ENCODE measurements at regions of chr17 and their contacts with region 1.

Region 1: GRCh38 chr17:5419356-5419958 is at the start of gene NUP88:
- DNase-seq: peak; percentile 98
- H3K4me3 ChIP-seq: peak within 1 kb of the TSS; percentile 88
- H3K27ac ChIP-seq: peak within 1 kb of the TSS; percentile 96
- H3K4me1 ChIP-seq: peaks cover 31% of the 10 kb centered on the region
- CTCF ChIP-seq: no peak
- total RNA-seq, gene NUP88: 214 and 238 TPM in 2 replicates

Region 2: DNA sequence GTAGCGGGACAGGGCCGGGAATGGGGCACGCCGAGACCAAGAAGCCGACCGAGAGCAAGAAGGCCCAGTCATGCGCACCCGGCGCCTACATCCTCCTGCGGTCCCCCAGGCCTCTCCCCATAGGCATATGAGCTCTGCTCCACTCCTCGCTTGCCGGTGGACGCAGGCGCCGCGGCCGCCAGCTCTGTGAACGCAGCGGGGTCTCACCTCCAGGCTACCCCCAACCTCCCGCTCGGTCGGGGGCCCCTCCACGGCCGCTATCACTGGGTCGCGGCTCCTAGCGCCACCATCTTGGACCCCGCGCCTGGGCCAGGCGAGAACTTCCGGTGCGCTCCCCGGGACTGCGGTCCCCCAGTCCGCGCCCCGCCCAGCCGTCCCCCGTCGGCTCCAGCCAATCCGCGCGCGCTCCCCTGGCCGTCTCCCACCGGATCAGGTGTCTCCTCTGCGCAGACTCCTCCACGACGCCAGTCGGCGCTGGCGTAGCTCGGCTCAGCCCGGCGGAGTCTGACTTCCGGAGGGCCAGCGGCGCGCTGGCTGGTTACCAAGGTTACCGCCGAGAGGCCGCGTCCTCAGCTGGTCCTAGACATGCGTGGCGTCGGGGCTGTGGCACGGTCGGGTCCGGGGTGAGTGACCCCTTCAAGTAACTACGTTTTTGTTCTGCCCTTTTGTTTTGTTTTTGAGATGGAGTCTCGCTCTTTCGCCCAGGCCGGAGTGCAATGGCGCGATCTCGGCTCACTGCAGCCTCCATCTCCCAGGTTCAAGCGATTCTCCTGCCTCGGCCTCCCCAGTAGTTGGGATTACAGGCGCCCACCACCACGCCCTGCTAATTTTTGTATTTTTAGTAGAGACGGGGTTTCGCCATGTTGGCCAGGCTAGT is 227.7 kb before region 1 on chr17 and contains the start of gene ZNF594:
- CTCF ChIA-PET with region 1: no interaction called
- POLR2A ChIA-PET with region 1: no interaction called
- intact Hi-C with region 1: loop called (anchors 2 kb)
- DNase-seq: peak; percentile 97
- H3K4me3 ChIP-seq: peak within 1 kb of the TSS; percentile 97
- H3K27ac ChIP-seq: peak within 1 kb of the TSS; percentile 46
- H3K4me1 ChIP-seq: peaks cover 24% of the 10 kb centered on the region
- CTCF ChIP-seq: peak; percentile 86
- total RNA-seq, gene ZNF594: 42.5 and 43.4 TPM in 2 replicates

Region 3: DNA sequence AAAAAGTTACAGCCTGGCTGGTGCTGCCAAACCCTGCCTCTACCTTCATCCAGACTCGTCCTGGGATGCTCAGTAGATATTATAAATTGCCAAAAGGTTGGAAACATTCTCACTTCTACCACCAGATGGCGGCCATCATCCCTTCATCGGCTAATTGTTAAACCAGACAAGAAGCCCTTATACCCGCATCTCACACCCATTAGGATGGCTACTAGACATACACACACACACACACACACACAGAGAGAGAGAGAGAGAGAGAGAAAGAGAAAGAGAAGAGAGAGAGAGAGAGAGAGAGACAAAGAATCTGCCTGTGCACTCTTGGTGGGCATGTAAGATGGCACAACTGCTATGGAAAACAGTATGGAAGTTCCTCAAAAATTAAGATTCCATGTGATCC is 169.8 kb before region 1 on chr17:
- CTCF ChIA-PET with region 1: no interaction called
- POLR2A ChIA-PET with region 1: interaction called, 4 read pairs
- intact Hi-C with region 1: loop called (anchors 5 kb)
- DNase-seq: peak; percentile 89
- H3K4me3 ChIP-seq: no peak overlapping the region
- H3K27ac ChIP-seq: no peak overlapping the region
- H3K4me1 ChIP-seq: peaks cover 7% of the 10 kb centered on the region
- CTCF ChIP-seq: peak; percentile 82

Region 4: DNA sequence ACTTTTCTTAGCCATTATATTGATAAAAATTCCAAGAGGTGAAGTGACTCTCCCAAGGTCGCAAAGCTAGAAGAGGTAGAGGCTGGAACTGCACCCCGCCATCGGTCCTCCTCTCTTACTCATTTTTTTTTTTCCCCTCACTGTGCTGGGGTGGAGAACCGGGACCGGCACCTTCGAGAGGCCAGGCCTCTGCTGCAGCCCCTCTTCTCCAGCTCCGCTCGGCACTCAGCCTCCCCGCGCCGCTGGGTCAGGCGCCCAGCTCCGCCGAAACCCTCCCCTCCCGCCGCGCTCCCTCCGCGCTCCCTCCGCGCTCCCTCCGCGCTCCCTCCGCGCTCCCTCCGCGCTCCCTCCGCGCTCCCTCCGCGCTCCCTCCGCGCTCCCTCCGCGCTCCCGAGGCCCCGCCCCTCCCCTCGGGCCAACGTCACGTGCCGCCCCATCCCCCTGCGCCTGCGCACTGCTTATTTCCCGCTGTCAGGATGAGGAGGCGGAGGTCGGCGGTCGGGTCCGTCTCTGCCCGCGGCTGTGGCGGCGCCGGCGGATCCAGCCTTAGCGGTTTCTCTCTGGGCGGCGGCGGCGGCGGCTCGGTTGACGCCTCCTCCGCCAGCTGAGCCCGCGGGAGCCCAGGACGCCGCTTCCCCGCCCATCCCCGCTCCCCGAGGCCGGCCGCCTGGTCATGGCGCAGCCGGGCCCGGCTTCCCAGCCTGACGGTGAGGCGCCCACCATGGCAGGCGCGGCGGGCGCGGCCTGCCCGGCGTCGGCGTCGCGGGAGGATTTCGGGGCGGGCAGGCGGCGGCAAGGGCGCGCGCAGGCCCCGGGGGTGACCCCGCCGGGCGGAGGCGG is 137.4 kb before region 1 on chr17 and contains the start of gene RABEP1:
- CTCF ChIA-PET with region 1: no interaction called
- POLR2A ChIA-PET with region 1: interaction called, 4 read pairs
- intact Hi-C with region 1: loop called (anchors 2 kb)
- DNase-seq: peak; percentile 95
- H3K4me3 ChIP-seq: peak within 1 kb of the TSS; percentile 74
- H3K27ac ChIP-seq: peak within 1 kb of the TSS; percentile 50
- H3K4me1 ChIP-seq: peaks cover 40% of the 10 kb centered on the region
- CTCF ChIP-seq: peak; percentile 20; the same call in 1 of the 2 replicates
- total RNA-seq, gene RABEP1: 53.2 and 58.6 TPM in 2 replicates

Region 5: DNA sequence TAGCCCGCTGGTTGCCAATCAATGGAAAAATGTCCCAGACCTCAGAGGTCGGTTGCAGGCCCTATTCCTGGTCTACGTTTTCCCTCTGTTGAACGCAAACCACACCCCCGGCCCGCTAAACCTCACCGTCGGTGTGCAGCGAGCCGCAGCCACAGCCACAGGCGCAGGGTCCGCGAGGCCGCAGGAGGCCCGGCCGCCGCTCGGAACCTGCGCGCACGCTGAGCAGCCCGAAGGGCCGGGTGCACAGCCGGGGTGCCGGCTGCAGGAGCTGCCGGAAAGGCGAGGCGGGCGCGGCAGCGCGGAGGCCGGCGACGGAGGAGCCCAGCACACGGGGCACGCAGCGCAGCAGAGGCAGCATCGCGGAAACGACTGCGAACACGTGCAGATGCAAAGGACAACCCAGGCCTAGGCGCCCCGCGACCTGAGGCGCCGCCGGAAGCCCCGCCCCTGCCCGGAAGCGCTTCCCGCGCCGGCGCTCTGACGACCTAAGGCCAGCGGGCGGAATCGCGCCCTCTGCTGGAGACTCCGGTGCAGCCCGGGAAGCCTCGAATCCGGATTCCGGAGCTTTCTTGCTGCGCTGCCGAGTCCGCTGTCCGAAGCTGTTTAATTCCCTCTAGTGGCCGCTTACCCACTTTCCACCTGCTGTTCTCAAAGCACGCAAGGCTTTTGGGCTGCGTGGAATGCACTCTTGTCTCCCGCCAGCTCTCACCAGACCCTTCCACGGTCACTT is 19.4 kb after region 1 on chr17 and contains the start of gene C1QBP:
- CTCF ChIA-PET with region 1: interaction called, 4 read pairs
- POLR2A ChIA-PET with region 1: interaction called, 3 read pairs
- intact Hi-C with region 1: loop called (anchors 2 kb)
- DNase-seq: peak; percentile 96
- H3K4me3 ChIP-seq: peak within 1 kb of the TSS; percentile 84
- H3K27ac ChIP-seq: peak within 1 kb of the TSS; percentile 58
- H3K4me1 ChIP-seq: peaks cover 27% of the 10 kb centered on the region
- CTCF ChIP-seq: peak; percentile 94
- total RNA-seq, gene C1QBP: 257 and 260 TPM in 2 replicates

Region 6: GRCh38 chr17:5468075-5468473 is 48.6 kb after region 1 on chr17:
- CTCF ChIA-PET with region 1: interaction called, 4 read pairs
- POLR2A ChIA-PET with region 1: no interaction called
- intact Hi-C with region 1: loop called (anchors 2 kb)
- DNase-seq: peak; percentile 27
- H3K4me3 ChIP-seq: peak overlapping the region; percentile 86
- H3K27ac ChIP-seq: peak overlapping the region; percentile 45
- H3K4me1 ChIP-seq: peaks cover 24% of the 10 kb centered on the region
- CTCF ChIP-seq: no peak

Region 7: DNA sequence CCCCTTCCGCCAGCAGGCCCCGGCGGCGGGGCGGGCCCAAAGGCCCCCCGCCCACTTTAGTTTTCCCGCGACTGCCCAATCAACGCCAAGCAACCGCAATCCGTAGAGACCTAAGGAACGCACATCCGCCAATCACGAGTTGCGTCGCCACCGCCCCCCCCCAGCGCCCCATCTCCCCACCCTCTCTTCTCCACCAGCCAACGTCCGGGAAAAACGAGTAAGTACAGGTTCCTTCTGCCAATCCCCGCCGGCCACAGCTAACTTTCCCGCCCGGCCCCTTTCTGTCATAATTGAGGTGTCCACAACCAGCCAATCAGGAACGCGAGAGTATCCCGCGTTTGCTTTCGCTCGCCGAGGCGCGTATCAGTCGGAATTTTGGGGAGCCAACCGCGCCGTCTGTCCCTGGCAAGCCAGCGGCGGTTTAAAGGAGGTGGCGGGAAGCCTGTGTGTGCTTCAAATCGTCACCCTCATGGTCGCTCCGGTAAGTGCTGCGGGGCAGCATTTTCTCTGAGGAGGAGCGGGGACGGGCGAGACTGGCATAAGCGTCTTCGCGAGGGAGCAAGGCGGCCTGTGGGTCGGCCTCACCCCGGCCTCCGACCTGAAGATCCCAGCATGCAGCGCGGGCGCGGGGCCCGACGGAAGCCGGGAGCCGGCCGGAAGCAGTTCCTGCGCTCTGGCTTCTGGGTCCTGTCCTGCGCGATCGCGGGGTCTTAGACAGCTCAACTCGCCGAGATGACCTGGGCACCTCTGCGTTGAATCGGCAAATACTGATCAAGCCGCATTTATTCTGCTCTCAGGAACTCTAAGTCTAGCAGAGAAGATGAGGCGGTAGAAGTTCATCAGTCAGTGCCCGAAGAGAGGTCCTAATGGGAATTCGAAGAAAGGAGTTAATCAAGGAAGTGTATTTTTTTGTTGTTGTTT is 67.0 kb after region 1 on chr17 and contains the start of gene MIS12:
- CTCF ChIA-PET with region 1: no interaction called
- POLR2A ChIA-PET with region 1: no interaction called
- intact Hi-C with region 1: loop called (anchors 1 kb)
- DNase-seq: peak; percentile 99
- H3K4me3 ChIP-seq: peak within 1 kb of the TSS; percentile 85
- H3K27ac ChIP-seq: peak within 1 kb of the TSS; percentile 89
- H3K4me1 ChIP-seq: peaks cover 28% of the 10 kb centered on the region
- CTCF ChIP-seq: no peak
- total RNA-seq, gene MIS12: 21.0 and 26.4 TPM in 2 replicates

Region 8: DNA sequence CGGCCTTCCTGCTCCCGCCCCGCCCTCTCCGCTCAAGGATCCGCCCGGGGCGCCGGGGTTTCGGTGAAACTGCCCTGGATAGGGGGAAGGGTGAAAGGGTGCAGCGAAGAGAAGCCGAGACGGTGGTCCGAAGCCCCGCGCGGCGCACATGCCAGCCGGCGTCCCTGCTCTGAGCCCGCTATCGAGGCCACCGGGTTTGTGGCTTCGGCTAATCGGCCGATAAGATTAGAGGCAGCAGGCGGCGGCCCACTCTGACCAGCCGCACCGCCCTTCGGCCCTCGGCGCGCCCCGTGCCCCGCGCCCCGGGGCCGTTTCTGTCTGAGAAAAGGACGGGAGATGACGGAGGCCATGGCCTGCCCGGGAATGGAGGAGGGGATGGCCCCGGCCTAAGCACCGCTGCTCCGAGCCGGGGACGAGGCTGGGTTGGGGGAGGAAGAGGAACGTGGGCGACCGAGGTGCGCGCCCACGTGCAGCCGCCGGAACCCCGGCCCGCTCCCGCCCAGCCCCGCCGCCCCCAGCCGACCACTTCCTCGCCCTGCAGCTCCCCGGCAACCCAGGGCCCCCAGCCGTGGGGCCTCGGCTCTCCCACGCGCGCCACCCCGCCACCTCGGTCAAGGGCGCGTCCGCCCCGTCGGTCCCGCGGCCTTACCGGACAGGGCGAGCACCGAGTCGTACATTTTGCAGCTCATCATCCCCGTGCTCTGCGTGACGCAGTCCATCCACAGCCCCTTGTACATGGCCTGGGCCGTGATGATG is 1841.9 kb after region 1 on chr17:
- CTCF ChIA-PET with region 1: no interaction called
- POLR2A ChIA-PET with region 1: no interaction called
- intact Hi-C with region 1: no loop called
- DNase-seq: no peak
- H3K4me3 ChIP-seq: no peak overlapping the region
- H3K27ac ChIP-seq: no peak overlapping the region
- H3K4me1 ChIP-seq: peaks cover 17% of the 10 kb centered on the region
- CTCF ChIP-seq: no peak